Astrocyte of the cerebellum (primary cell): ENCODE measurements at regions of chr2 and their contacts with region 1.

Region 1: DNA sequence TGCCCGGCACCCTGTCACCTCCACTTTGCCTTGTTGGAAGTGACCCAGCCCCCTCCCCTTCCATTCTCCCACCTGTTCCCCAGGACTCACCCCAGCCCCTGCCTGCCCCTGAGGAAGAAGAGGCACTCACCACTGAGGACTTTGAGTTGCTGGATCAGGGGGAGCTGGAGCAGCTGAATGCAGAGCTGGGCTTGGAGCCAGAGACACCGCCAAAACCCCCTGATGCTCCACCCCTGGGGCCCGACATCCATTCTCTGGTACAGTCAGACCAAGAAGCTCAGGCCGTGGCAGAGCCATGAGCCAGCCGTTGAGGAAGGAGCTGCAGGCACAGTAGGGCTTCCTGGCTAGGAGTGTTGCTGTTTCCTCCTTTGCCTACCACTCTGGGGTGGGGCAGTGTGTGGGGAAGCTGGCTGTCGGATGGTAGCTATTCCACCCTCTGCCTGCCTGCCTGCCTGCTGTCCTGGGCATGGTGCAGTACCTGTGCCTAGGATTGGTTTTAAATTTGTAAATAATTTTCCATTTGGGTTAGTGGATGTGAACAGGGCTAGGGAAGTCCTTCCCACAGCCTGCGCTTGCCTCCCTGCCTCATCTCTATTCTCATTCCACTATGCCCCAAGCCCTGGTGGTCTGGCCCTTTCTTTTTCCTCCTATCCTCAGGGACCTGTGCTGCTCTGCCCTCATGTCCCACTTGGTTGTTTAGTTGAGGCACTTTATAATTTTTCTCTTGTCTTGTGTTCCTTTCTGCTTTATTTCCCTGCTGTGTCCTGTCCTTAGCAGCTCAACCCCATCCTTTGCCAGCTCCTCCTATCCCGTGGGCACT is 4.5 kb downstream of the RETREG2 start:
- DNase-seq: no peak
- H3K4me3 ChIP-seq: no peak overlapping the region
- CTCF ChIP-seq: no peak

Region 2: DNA sequence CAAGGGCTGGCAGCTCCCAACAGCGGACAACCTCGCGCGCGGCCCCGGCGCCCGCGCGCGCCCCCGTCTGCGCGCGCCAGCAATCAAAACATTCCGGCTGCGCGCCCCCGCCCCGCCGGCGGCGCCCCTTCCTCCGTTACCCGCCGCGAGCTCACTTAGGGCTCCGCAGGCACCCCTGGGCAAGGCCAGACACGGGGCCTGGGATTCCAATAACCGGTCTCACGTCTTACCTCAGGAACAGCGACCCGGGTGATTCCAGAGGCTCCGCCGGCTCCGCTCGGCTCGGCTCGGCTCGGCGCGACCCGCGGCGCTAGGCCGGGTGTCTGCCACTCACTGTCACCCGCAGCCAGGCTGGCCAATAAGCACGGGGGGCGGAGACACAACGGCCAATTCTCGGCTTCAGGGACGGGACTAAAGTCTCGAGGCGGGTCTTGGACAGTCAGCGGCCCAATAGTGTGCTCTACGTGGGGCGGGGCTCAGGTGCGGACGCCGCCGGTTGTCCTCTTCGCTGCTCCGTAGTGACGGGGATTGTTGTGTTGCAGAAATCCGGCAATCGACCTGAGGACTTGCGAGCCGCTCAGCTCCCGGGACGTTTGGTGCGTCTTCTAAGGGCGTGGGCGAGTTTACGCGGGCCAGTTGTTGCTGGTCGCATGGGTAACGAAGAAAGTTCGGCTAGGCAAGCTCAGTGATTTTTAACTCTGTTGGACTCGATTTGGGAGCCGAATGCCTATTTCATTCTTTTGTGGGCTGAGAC is 46.9 kb after region 1 on chr2 and contains the starts of genes ANKZF1 and ATG9A:
- in situ Hi-C with region 1: loop called (anchors 5 kb)
- DNase-seq: peak; percentile 96
- H3K4me3 ChIP-seq: peak within 1 kb of the TSS; percentile 70
- CTCF ChIP-seq: no peak

Region 3: DNA sequence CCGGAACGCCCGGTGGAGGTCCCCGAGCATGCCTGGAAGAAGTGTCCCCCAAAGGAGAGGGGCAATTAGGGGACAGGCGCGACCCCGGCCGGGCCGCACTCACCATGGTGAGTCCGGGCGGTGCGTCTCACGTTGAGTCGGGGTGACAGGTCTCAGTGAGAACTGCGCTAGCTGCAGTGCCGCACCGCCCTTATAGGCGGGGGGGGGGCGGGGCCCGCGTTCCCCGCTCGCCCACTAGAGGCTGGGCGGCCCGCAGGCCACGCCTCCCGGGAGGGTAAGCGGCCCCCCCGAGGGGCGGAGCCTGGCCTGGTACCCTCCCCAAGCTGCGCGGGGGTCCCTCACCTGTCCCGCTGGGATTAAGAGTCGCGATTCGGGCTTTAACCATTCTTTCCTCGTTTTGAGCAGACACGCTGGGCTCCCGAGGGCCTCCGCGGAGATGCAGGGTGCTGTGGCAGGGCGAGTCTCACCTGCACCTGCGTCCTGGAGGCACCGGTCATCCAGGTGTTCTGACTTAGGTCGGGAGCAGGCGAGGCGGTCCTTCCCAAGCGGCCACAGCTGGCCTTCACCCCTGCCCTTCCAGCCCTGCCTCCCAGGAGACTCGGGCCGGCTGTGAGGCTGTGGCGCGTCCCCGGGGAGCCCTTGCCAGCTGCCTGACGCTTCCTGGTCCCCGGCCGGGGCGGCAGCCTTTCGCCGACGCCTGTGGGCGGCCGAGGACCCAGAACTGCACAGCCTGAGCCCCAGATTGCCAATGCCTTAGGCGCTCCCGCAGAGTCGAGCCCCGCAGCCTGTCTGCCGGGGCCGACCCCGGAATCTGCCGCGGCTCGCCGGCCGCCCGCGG is 71.4 kb after region 1 on chr2 and contains the start of gene TUBA4A:
- in situ Hi-C with region 1: no loop called
- DNase-seq: no peak
- H3K4me3 ChIP-seq: peak within 1 kb of the TSS; percentile 37
- CTCF ChIP-seq: no peak